ENCODE measurements at regions of chr11 and their contacts with region 1.

Region 1: GRCh38 chr11:19076744-19077589 is 16.4 kb upstream of the MRGPRX2 start:
- DNase-seq: peak; percentile 75
- H3K4me3 ChIP-seq: no peak overlapping the region
- H3K27ac ChIP-seq: peak overlapping the region; percentile 83
- H3K4me1 ChIP-seq: peaks cover 45% of the 10 kb centered on the region
- H3K27me3 ChIP-seq: no peaks in the 10 kb centered on the region
- CTCF ChIP-seq: peak; percentile 94 to 97
- POLR2A ChIP-seq: no peak

Region 2: GRCh38 chr11:19087658-19088057 is 10.7 kb after region 1 on chr11:
- CTCF ChIA-PET with region 1: interaction called, 43 read pairs
- POLR2A ChIA-PET with region 1: interaction called, 6 read pairs
- dilution Hi-C with region 1: no loop called
- intact Hi-C with region 1: loop called (anchors 1 kb)
- DNase-seq: peak; percentile 97
- H3K4me3 ChIP-seq: no peak overlapping the region
- H3K27ac ChIP-seq: peak overlapping the region; percentile 78
- H3K4me1 ChIP-seq: peaks cover 47% of the 10 kb centered on the region
- H3K27me3 ChIP-seq: no peaks in the 10 kb centered on the region
- CTCF ChIP-seq: no peak
- POLR2A ChIP-seq: peak; percentile 50

Region 3: GRCh38 chr11:19116971-19117750 is 40.2 kb after region 1 on chr11 and contains the start of gene ZDHHC13:
- CTCF ChIA-PET with region 1: interaction called, 74 read pairs
- POLR2A ChIA-PET with region 1: interaction called, 6 read pairs
- dilution Hi-C with region 1: no loop called
- intact Hi-C with region 1: loop called (anchors 1 kb)
- DNase-seq: peak; percentile 96
- H3K4me3 ChIP-seq: peak within 1 kb of the TSS; percentile 74 to 92 (median 83)
- H3K27ac ChIP-seq: peak within 1 kb of the TSS; percentile 45
- H3K4me1 ChIP-seq: peaks cover 44% of the 10 kb centered on the region
- H3K27me3 ChIP-seq: no peaks in the 10 kb centered on the region
- CTCF ChIP-seq: peak; percentile 51 to 74
- POLR2A ChIP-seq: peak; percentile 78
- total RNA-seq, gene ZDHHC13: 50.1 and 52.9 TPM in 2 replicates

Region 4: DNA sequence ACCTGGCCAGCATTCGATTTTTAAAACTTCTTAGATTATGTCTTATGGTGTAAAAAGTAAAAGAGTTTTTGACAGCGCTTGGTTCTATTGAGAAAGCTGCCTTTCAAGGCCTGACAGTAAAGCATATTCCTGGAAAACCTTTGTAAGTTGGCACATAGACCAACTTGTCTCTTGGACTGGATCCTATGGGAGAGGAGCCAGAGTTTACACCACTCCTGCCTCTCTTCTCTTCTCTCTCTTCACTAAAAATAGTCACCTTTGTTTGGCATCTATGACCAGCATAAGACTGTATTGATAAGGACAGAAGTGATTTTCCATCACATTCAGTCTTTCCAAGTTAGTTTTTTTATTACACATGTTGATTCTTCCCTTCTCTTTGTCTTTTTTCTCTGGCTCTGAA is 91.1 kb after region 1 on chr11:
- CTCF ChIA-PET with region 1: interaction called, 36 read pairs
- POLR2A ChIA-PET with region 1: no interaction called
- dilution Hi-C with region 1: no loop called
- intact Hi-C with region 1: no loop called
- DNase-seq: no peak
- H3K4me3 ChIP-seq: no peak overlapping the region
- H3K27ac ChIP-seq: no peak overlapping the region
- H3K4me1 ChIP-seq: peaks cover 9% of the 10 kb centered on the region
- H3K27me3 ChIP-seq: no peaks in the 10 kb centered on the region
- CTCF ChIP-seq: no peak
- POLR2A ChIP-seq: no peak

Region 5: GRCh38 chr11:19246816-19247215 is 169.8 kb after region 1 on chr11:
- CTCF ChIA-PET with region 1: interaction called, 14 read pairs
- POLR2A ChIA-PET with region 1: no interaction called
- dilution Hi-C with region 1: no loop called
- intact Hi-C with region 1: no loop called
- DNase-seq: no peak
- H3K4me3 ChIP-seq: no peak overlapping the region
- H3K27ac ChIP-seq: no peak overlapping the region
- H3K4me1 ChIP-seq: peaks cover 5% of the 10 kb centered on the region
- H3K27me3 ChIP-seq: peaks cover 4 to 8% of the 10 kb centered on the region in 2 experiments
- CTCF ChIP-seq: no peak
- POLR2A ChIP-seq: no peak

Region 6: GRCh38 chr11:19553683-19554333 is 476.8 kb after region 1 on chr11:
- CTCF ChIA-PET with region 1: interaction called, 72 read pairs
- POLR2A ChIA-PET with region 1: no interaction called
- dilution Hi-C with region 1: no loop called
- intact Hi-C with region 1: no loop called
- DNase-seq: peak; percentile 65
- H3K4me3 ChIP-seq: no peak overlapping the region
- H3K27ac ChIP-seq: no peak overlapping the region
- H3K4me1 ChIP-seq: no peaks in the 10 kb centered on the region
- H3K27me3 ChIP-seq: no peaks in the 10 kb centered on the region
- CTCF ChIP-seq: peak; percentile 79 to 81
- POLR2A ChIP-seq: no peak

Region 7: DNA sequence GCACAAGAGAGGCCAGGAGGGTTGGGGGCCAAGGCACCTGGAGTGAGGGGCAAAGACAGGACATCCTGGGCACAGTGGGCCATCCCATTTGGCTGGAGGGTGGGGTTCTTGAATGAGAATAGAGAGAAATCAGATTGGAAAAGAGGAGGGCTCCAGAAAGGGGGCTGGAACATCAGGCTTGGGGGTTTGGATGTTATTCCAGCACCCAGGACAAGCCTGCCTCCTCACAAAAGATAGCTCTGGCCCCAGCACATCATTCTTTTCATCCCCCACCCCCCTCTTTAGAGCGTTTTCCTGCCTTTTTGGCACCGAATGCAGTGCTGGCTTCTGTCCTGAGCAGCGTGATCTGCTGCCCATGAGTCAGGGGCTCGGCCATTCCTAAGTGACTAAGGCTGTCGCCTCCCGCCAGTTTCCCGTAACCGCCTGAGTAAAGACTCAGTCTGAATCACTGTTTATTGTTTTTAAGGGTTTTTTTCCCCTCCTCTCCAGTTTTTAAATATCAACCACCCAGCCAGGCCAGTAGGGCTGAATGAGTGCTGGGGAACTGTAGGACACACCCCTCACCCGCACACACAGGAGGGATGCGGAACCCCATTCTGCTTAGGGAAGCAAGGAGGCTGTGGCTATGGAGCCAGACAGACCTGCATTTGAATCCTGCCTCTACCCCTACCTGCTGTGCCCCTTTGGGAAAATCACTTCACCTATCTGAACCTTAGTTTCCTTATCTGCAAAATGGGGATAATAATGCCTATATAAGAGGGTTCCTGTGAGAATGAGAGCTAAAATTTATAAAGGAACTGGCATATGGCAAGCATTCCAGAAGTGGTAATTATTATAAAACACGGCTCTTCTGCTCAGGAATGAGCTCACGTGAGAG is 603.2 kb after region 1 on chr11:
- CTCF ChIA-PET with region 1: no interaction called
- POLR2A ChIA-PET with region 1: no interaction called
- dilution Hi-C with region 1: no loop called
- intact Hi-C with region 1: no loop called
- DNase-seq: peak; percentile 98
- H3K4me3 ChIP-seq: no peak overlapping the region
- H3K27ac ChIP-seq: peak overlapping the region; percentile 99
- H3K4me1 ChIP-seq: peaks cover 49% of the 10 kb centered on the region
- H3K27me3 ChIP-seq: no peaks in the 10 kb centered on the region
- CTCF ChIP-seq: no peak
- POLR2A ChIP-seq: no peak

Measured in endothelial cell of umbilical vein (primary cell).